Ovary (tissue), 10 donors: ENCODE measurements at regions of chr11 and their contacts with region 1.

Region 1: GRCh38 chr11:83292709-83293456 is 6.7 kb upstream of the CCDC90B start:
- DNase-seq: peak in 1 of 5 donors; percentile 25
- H3K4me3 ChIP-seq: no peak overlapping the region
- H3K27ac ChIP-seq: no peak overlapping the region
- H3K4me1 ChIP-seq: no peaks in the 10 kb centered on the region
- H3K27me3 ChIP-seq: no peaks in the 10 kb centered on the region
- CTCF ChIP-seq: peak; percentile 8 to 43 (median 22)
- EP300 ChIP-seq: no peak
- POLR2A ChIP-seq: no peak

Region 2: GRCh38 chr11:83724008-83724461 is 431.2 kb after region 1 on chr11:
- intact Hi-C with region 1: loop called in 1 of 4 experiments (anchors 10 kb)
- DNase-seq: peak in 1 of 5 donors; percentile 53
- H3K4me3 ChIP-seq: peak overlapping the region; percentile 36
- H3K27ac ChIP-seq: no peak overlapping the region
- H3K4me1 ChIP-seq: no peaks in the 10 kb centered on the region
- H3K27me3 ChIP-seq: no peaks in the 10 kb centered on the region
- CTCF ChIP-seq: peak in 1 of 3 donors; percentile 18
- EP300 ChIP-seq: no peak
- POLR2A ChIP-seq: no peak

Region 3: DNA sequence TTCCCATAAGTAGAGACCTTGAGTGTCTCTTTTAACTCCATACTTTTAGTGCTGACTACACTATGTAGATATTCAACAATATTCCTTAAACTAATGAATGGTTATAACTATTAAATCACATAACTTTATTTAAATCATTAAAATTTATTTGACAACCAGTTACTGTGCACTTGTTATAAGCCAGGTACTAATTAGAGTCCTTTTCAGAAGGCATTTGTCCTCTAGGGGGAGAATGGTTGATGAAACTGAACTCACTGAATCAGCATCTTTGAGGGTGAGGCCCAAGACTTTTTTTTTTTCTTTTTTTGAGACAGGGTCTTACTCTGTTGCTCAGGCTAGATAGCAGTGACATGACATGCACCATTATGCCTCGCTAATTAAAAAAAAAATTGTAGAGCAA is 508.9 kb after region 1 on chr11:
- intact Hi-C with region 1: loop called in 1 of 4 experiments (anchors 10 kb)
- DNase-seq: no peak
- H3K4me3 ChIP-seq: no peak overlapping the region
- H3K27ac ChIP-seq: no peak overlapping the region
- H3K4me1 ChIP-seq: no peaks in the 10 kb centered on the region
- H3K27me3 ChIP-seq: no peaks in the 10 kb centered on the region
- CTCF ChIP-seq: no peak
- EP300 ChIP-seq: no peak
- POLR2A ChIP-seq: no peak

Region 4: GRCh38 chr11:83819933-83820549 is 527.2 kb after region 1 on chr11:
- intact Hi-C with region 1: loop called in 2 of 4 experiments (anchors 5 to 10 kb)
- DNase-seq: no peak
- H3K4me3 ChIP-seq: no peak overlapping the region
- H3K27ac ChIP-seq: no peak overlapping the region
- H3K4me1 ChIP-seq: no peaks in the 10 kb centered on the region
- H3K27me3 ChIP-seq: no peaks in the 10 kb centered on the region
- CTCF ChIP-seq: peak; percentile 33 to 58 (median 47)
- EP300 ChIP-seq: no peak
- POLR2A ChIP-seq: no peak

Region 5: GRCh38 chr11:83827940-83828554 is 535.2 kb after region 1 on chr11:
- intact Hi-C with region 1: loop called in 1 of 4 experiments (anchors 10 kb)
- DNase-seq: no peak
- H3K4me3 ChIP-seq: no peak overlapping the region
- H3K27ac ChIP-seq: no peak overlapping the region
- H3K4me1 ChIP-seq: no peaks in the 10 kb centered on the region
- H3K27me3 ChIP-seq: no peaks in the 10 kb centered on the region
- CTCF ChIP-seq: peak in 1 of 3 donors; percentile 51
- EP300 ChIP-seq: no peak
- POLR2A ChIP-seq: no peak